Natural killer cell (primary cell): ENCODE measurements at regions of chr6 and their contacts with region 1.

Region 1: GRCh38 chr6:109455502-109456282 is at the start of gene MICAL1:
- DNase-seq: peak; percentile 71 to 90
- ATAC-seq: peak; percentile 51 to 84 (median 60)
- H3K4me3 ChIP-seq: peak within 1 kb of the TSS; percentile 98
- H3K4me3 Mint-ChIP-seq: peak within 1 kb of the TSS; percentile 93
- H3K27ac ChIP-seq: peak within 1 kb of the TSS; percentile 99
- H3K27ac Mint-ChIP-seq: peak within 1 kb of the TSS; percentile 86 to 99
- H3K4me1 ChIP-seq: peaks cover 60% of the 10 kb centered on the region
- H3K4me1 Mint-ChIP-seq: peaks cover 45 to 52% of the 10 kb centered on the region in 2 donors
- H3K27me3 ChIP-seq: no peaks in the 10 kb centered on the region
- H3K27me3 Mint-ChIP-seq: no peaks in the 10 kb centered on the region
- CTCF ChIP-seq: peak; percentile 13
- total RNA-seq, gene MICAL1: 72.4 to 102 (median 81.3) TPM

Region 2: GRCh38 chr6:109236115-109237076 is 219.3 kb before region 1 on chr6:
- intact Hi-C with region 1: no loop called
- DNase-seq: peak; percentile 32 to 54
- ATAC-seq: peak; percentile 62 to 73 (median 66)
- H3K4me3 ChIP-seq: no peak overlapping the region
- H3K4me3 Mint-ChIP-seq: peak overlapping the region; percentile 72
- H3K27ac ChIP-seq: peak overlapping the region; percentile 76
- H3K27ac Mint-ChIP-seq: peak overlapping the region; percentile 81 to 88
- H3K4me1 ChIP-seq: peaks cover 30% of the 10 kb centered on the region
- H3K4me1 Mint-ChIP-seq: peaks cover 36 to 38% of the 10 kb centered on the region in 2 donors
- H3K27me3 ChIP-seq: no peaks in the 10 kb centered on the region
- H3K27me3 Mint-ChIP-seq: no peaks in the 10 kb centered on the region
- CTCF ChIP-seq: peak; percentile 34

Region 3: DNA sequence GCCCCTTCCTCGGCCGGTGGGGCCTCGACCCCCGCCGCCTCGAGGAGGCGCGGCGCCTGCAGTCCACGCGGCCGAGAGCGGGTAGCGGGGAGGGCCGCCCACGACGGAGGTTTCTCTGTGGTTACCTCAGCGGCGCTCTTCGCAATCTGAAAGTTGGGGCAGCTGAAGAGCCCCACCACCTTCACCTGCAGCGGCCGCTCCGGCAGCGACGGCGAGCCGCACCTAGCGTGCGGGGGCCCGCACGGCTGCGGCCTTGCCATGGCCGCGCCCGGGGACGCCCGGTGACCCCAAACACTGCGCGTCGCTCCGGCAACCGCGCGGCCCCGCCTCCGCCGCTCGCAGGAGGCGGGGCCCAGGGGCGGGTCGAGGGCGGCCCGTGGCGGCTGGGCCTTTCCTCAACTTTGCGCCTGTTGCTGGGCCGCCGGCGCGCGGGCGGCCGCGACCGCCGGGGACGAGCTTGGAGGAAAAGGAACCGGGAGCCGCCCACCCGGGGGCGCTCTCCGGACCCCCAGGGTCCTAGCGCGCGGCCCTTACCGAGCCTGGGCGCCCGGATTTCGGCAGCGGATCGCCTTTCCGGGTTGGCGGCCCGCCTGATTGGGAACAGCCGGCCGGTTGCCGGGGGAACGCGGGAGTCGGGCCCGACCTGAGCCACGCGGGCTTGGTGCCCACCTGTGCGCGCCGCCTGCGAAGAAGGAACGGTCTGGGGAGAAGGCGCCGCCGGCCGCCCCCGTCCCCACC is 15.2 kb before region 1 on chr6 and contains the starts of genes PPIL6 and SMPD2:
- intact Hi-C with region 1: loop called (anchors 1 kb)
- DNase-seq: peak; percentile 81 to 90
- ATAC-seq: peak; percentile 87 to 94 (median 89)
- H3K4me3 ChIP-seq: peak within 1 kb of the TSS; percentile 64
- H3K4me3 Mint-ChIP-seq: peak within 1 kb of the TSS; percentile 89
- H3K27ac ChIP-seq: peak within 1 kb of the TSS; percentile 74
- H3K27ac Mint-ChIP-seq: peak within 1 kb of the TSS; percentile 81 to 92
- H3K4me1 ChIP-seq: peaks cover 23% of the 10 kb centered on the region
- H3K4me1 Mint-ChIP-seq: peaks cover 17 to 32% of the 10 kb centered on the region in 2 donors
- H3K27me3 ChIP-seq: no peaks in the 10 kb centered on the region
- H3K27me3 Mint-ChIP-seq: no peaks in the 10 kb centered on the region
- CTCF ChIP-seq: no peak
- total RNA-seq, gene PPIL6: 0.28 to 0.70 (median 0.40) TPM
- total RNA-seq, gene SMPD2: 25.0 to 37.3 (median 29.3) TPM

Region 4: DNA sequence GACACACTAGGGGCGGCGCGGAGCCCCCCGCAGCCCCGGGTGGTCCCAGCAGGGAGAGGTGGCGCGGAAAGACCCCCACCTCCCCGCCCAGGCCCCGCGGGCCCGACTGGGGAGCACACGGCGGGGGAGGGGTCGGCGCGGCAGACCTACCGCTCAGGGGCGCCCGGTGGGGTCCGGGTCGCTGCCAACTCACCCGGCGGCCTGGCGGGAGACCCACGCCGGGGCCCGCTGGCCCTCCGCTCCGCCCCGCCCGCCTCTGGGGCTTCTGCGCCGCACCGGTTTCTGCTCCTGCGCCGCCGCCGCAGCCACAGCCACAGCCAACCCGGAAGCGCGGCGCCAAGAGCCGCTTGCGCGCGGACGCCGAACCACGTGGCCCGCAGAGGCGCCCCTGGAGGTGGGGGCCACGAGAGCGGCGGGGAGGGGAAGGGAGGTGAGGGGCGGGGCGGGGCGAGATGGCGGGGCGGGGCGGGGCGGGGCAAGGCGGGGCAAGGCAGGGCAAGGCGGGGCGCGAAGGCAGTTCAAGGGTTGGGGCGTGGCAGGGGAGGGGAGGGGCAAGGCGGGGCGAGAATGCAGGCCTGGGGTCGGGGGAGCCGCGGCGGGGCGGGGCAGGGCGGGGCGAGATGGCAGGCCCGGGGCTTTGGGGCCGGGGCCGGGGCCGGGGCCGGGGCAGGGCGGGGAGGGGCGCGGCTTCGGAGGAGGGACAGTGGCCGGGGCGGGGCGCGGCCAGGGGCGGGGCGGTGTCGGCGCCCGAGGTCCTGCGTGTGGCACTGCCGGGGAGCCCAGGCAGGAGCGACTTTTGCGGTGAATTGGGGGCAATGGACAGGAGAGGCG is 27.4 kb after region 1 on chr6 and contains the start of gene ZBTB24:
- intact Hi-C with region 1: loop called (anchors 2 kb)
- DNase-seq: peak; percentile 86 to 95
- ATAC-seq: peak; percentile 86 to 95 (median 91)
- H3K4me3 ChIP-seq: peak within 1 kb of the TSS; percentile 80
- H3K4me3 Mint-ChIP-seq: peak within 1 kb of the TSS; percentile 92
- H3K27ac ChIP-seq: peak within 1 kb of the TSS; percentile 64
- H3K27ac Mint-ChIP-seq: peak within 1 kb of the TSS; percentile 67 to 85
- H3K4me1 ChIP-seq: peaks cover 32% of the 10 kb centered on the region
- H3K4me1 Mint-ChIP-seq: peaks cover 42 to 53% of the 10 kb centered on the region in 2 donors
- H3K27me3 ChIP-seq: no peaks in the 10 kb centered on the region
- H3K27me3 Mint-ChIP-seq: no peaks in the 10 kb centered on the region
- CTCF ChIP-seq: no peak
- total RNA-seq, gene ZBTB24: 6.7 to 10.6 (median 8.6) TPM

Region 5: DNA sequence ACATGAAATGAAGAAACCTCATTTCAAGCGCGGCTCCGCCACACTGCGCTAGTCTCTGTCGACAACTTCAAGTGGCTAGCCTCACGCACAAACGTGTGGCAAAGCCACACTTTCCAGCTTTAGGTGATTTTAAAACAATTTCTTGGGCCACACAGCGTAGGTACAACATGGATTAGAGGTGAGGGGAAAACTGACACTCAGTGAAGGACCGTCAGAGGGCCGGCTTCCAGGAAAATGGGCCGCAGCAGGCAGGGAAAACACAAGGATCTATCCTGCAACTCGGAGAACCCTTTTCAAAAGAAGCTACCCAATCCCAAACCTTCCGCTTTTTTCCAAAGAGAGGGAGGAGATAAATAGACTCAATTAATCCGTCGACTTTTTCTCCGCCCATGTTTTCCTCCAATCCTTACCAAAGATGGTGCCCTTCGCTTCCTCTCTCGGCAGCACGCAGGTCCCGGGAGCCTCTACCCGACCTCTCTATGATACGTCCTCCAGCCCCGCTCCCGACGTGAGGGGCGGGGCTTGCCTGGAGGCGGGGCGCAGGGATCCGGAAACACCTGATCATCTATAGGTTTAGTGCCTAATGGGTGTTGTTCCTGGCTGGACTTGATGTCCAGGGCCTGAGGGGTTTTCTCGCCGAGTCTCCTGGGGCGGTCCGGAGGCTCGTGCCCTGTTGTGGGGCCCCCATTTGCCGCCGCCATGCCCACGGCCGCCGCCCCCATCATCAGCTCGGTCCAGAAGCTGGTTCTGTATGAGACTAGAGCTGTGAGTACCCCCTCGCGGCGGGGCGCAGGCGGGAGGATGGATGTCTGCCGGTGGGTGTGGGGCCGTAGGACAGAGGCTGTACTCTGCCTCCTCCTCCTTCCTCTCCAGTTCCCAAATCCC is 235.3 kb after region 1 on chr6 and contains the starts of genes AK9 and FIG4:
- intact Hi-C with region 1: loop called (anchors 10 kb)
- DNase-seq: peak; percentile 80 to 93
- ATAC-seq: peak; percentile 93 to 97 (median 96)
- H3K4me3 ChIP-seq: peak within 1 kb of the TSS; percentile 85
- H3K4me3 Mint-ChIP-seq: peak within 1 kb of the TSS; percentile 100
- H3K27ac ChIP-seq: peak within 1 kb of the TSS; percentile 79
- H3K27ac Mint-ChIP-seq: peak within 1 kb of the TSS; percentile 91 to 92
- H3K4me1 ChIP-seq: peaks cover 14% of the 10 kb centered on the region
- H3K4me1 Mint-ChIP-seq: peaks cover 34 to 49% of the 10 kb centered on the region in 2 donors
- H3K27me3 ChIP-seq: no peaks in the 10 kb centered on the region
- H3K27me3 Mint-ChIP-seq: no peaks in the 10 kb centered on the region
- CTCF ChIP-seq: no peak
- total RNA-seq, gene AK9: 14.0 to 19.2 (median 14.2) TPM
- total RNA-seq, gene FIG4: 15.7 to 38.5 (median 20.7) TPM